Activated CD4-positive, alpha-beta T cell treated with anti-CD3 and anti-CD28 coated beads for 36 hours (primary cell): ENCODE measurements at regions of chr3 and their contacts with region 1.

Region 1: GRCh38 chr3:11236595-11237461 is 35.4 kb upstream of the ATG7 start:
- DNase-seq: peak; percentile 90
- ATAC-seq: no peak
- H3K4me3 Mint-ChIP-seq: no peak overlapping the region
- H3K27ac Mint-ChIP-seq: no peak overlapping the region
- H3K4me1 Mint-ChIP-seq: peaks cover 46% of the 10 kb centered on the region
- H3K27me3 Mint-ChIP-seq: peaks cover 23% of the 10 kb centered on the region

Region 2: GRCh38 chr3:11195721-11196332 is 41.0 kb before region 1 on chr3:
- CTCF ChIA-PET with region 1: interaction called, 7 read pairs
- POLR2A ChIA-PET with region 1: interaction called, 3 read pairs
- intact Hi-C with region 1: loop called in 1 of 2 experiments (anchors 2 kb)
- DNase-seq: peak; percentile 64
- ATAC-seq: peak; percentile 87
- H3K4me3 Mint-ChIP-seq: peak overlapping the region; percentile 56
- H3K27ac Mint-ChIP-seq: peak overlapping the region; percentile 94
- H3K4me1 Mint-ChIP-seq: peaks cover 22% of the 10 kb centered on the region
- H3K27me3 Mint-ChIP-seq: peaks cover 13% of the 10 kb centered on the region

Region 3: DNA sequence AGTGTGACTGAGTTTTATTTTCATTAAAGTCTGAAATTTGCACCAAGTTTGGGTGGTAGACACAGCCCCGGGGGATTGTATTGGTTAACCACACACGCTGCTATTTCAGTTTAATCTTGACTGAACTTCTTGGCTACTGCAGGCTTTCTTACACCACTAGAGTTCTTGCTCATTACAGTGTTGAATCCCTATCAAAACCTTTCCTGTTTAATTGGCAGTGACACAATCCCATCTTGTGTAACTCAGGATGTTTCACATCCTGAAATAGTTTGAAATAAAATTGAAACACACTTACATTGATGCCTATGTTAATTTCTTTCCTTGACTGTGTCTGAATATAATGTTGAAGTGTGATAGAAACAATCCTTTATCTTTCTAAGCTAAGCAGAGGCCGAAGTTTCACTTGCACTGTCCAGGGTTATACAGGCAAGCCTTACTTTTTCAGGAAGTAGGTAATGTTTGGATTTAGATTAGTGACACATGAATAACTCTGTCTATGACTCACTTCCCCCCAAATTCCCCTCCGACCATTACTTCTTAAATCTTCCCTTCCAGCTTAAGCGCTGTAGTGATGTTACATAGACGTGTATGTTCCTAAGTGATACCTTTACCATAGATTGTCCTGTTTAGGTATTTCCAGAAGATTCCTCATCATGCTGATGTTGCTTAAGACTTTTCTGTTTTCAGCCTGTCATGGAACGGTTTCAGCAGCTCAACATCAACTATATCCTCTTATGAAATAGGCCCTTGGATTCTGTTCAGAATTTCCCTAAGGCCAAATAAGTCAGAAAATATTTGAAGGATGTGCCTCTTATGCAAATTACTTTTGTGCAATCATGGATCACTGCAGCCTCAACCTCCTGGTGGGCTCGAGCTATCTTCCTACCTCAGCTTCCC is 52.2 kb after region 1 on chr3:
- CTCF ChIA-PET with region 1: interaction called, 5 read pairs
- POLR2A ChIA-PET with region 1: interaction called, 3 read pairs
- intact Hi-C with region 1: loop called (anchors 1 to 2 kb)
- DNase-seq: no peak
- ATAC-seq: peak; percentile 43
- H3K4me3 Mint-ChIP-seq: no peak overlapping the region
- H3K27ac Mint-ChIP-seq: peak overlapping the region; percentile 83
- H3K4me1 Mint-ChIP-seq: peaks cover 57% of the 10 kb centered on the region
- H3K27me3 Mint-ChIP-seq: no peaks in the 10 kb centered on the region

Region 4: DNA sequence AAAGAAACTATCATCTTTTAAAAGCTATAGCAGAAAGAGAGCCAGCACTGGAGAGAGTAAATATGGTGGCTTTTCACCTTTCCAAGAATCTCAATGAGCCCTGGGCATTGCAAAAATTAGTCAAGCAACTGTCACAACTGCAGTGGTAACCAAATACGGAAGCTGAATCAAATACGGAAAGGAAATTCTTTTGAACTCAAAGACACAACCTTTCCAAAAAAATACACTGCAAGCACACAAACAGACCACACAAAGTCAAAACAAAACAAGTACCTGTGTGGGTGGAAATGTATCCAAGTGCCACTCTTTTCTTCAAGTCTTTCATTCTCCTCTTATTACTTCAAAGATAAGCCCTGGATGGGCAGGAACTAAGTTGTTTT is 389.2 kb after region 1 on chr3:
- CTCF ChIA-PET with region 1: interaction called, 4 read pairs
- POLR2A ChIA-PET with region 1: interaction called, 3 read pairs
- intact Hi-C with region 1: loop called (anchors 1 kb)
- DNase-seq: peak; percentile 44
- ATAC-seq: peak; percentile 67
- H3K4me3 Mint-ChIP-seq: peak overlapping the region; percentile 26
- H3K27ac Mint-ChIP-seq: peak overlapping the region; percentile 66
- H3K4me1 Mint-ChIP-seq: peaks cover 67% of the 10 kb centered on the region
- H3K27me3 Mint-ChIP-seq: no peaks in the 10 kb centered on the region

Region 5: GRCh38 chr3:11964553-11964952 is 727.7 kb after region 1 on chr3:
- CTCF ChIA-PET with region 1: no interaction called
- POLR2A ChIA-PET with region 1: no interaction called
- intact Hi-C with region 1: no loop called
- DNase-seq: no peak
- ATAC-seq: no peak
- H3K4me3 Mint-ChIP-seq: no peak overlapping the region
- H3K27ac Mint-ChIP-seq: no peak overlapping the region
- H3K4me1 Mint-ChIP-seq: no peaks in the 10 kb centered on the region
- H3K27me3 Mint-ChIP-seq: peaks cover 3% of the 10 kb centered on the region